Breast epithelium (tissue), 4 donors: ENCODE measurements at regions of chr6 and their contacts with region 1.

Region 1: GRCh38 chr6:128882991-128883611 is at the start of gene LAMA2:
- DNase-seq: peak; percentile 49 to 56
- H3K4me3 ChIP-seq: peak within 1 kb of the TSS; percentile 53 to 84 (median 57)
- H3K27ac ChIP-seq: peak within 1 kb of the TSS; percentile 46 to 87
- H3K4me1 ChIP-seq: no peaks in the 10 kb centered on the region
- H3K27me3 ChIP-seq: no peaks in the 10 kb centered on the region
- CTCF ChIP-seq: no peak
- POLR2A ChIP-seq: peak; percentile 33
- total RNA-seq, gene LAMA2: 116 to 293 (median 118) TPM

Region 2: GRCh38 chr6:128731249-128732165 is 151.6 kb before region 1 on chr6:
- intact Hi-C with region 1: loop called (anchors 10 kb)
- DNase-seq: no peak
- H3K4me3 ChIP-seq: no peak overlapping the region
- H3K27ac ChIP-seq: no peak overlapping the region
- H3K4me1 ChIP-seq: no peaks in the 10 kb centered on the region
- H3K27me3 ChIP-seq: no peaks in the 10 kb centered on the region
- CTCF ChIP-seq: peak in 2 of 3 donors; percentile 43 to 52
- POLR2A ChIP-seq: no peak

Region 3: DNA sequence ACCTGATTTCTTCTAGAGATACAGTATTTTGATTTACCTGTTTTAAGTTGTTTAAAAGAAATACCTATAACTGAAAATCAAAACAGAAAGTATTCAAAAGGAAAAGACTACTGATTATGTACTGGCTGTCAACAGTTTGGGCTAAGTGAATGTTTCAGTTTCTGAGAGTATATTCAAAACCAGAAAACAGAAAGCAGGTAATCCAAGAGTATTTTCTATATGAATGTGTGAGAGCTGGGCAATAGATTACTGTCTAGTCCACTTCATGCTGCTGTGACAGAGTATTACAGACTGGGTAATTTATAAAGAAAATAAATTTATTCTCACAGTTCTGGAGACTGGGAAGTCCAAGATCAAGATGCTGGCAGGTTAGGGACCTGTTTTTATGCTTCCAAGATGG is 565.9 kb after region 1 on chr6:
- intact Hi-C with region 1: no loop called
- DNase-seq: no peak
- H3K4me3 ChIP-seq: no peak overlapping the region
- H3K27ac ChIP-seq: no peak overlapping the region
- H3K4me1 ChIP-seq: no peaks in the 10 kb centered on the region
- H3K27me3 ChIP-seq: no peaks in the 10 kb centered on the region
- CTCF ChIP-seq: no peak
- POLR2A ChIP-seq: no peak